Heart right ventricle (tissue), 16 donors: ENCODE measurements at regions of chr20 and their contacts with region 1.

Region 1: GRCh38 chr20:39429716-39430115 is 467.6 kb downstream of the DHX35 start:
- DNase-seq: peak in 1 of 2 donors; percentile 9
- ATAC-seq: peak in 3 of 8 donors; percentile 28 to 67 (median 37)
- H3K4me3 ChIP-seq: no peak overlapping the region
- H3K27ac ChIP-seq: no peak overlapping the region
- H3K4me1 ChIP-seq: no peaks in the 10 kb centered on the region
- H3K27me3 ChIP-seq: no peaks in the 10 kb centered on the region
- CTCF ChIP-seq: peak in 8 of 9 donors; percentile 15 to 53 (median 40)

Region 2: DNA sequence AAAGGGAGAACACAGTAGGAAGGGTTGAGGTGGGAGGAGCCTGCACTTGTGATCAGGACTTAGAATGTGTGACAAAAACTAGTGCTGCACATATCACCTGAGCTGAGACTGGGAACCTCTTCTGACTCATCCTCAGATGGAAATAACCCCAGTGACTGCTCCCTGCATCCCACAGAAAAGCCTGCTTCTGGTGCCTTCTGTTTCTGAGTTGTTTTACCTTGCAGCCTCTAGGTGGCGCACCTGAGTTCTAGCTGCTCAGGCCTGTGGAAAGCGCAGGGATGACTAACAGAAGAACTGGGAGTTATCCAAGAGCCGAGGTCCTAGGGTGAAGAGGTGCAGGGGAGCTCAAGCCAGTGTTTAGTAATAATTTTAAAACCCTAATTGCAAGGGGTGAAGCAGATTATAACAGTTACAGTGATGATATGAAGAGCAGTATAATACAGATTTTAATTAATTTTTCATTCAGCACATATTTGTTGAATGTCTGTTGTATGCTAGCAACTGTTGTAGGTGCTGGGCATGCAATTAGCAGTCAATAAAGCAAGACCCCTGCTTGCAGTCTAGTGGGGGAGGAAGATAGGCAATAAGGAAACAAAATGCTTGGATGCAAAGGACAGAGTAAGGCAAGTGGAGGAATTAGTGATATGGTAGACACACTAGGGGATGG is 165.1 kb before region 1 on chr20:
- intact Hi-C with region 1: loop called in 3 of 10 experiments (anchors 5 to 10 kb)
- DNase-seq: peak; percentile 41 to 50
- ATAC-seq: peak; percentile 28 to 79 (median 54)
- H3K4me3 ChIP-seq: no peak overlapping the region
- H3K27ac ChIP-seq: no peak overlapping the region
- H3K4me1 ChIP-seq: peaks cover 0 to 24% (median 0%) of the 10 kb centered on the region in 9 donors
- H3K27me3 ChIP-seq: peaks cover 0 to 8% (median 0%) of the 10 kb centered on the region in 7 donors
- CTCF ChIP-seq: peak; percentile 58 to 92 (median 86)

Region 3: DNA sequence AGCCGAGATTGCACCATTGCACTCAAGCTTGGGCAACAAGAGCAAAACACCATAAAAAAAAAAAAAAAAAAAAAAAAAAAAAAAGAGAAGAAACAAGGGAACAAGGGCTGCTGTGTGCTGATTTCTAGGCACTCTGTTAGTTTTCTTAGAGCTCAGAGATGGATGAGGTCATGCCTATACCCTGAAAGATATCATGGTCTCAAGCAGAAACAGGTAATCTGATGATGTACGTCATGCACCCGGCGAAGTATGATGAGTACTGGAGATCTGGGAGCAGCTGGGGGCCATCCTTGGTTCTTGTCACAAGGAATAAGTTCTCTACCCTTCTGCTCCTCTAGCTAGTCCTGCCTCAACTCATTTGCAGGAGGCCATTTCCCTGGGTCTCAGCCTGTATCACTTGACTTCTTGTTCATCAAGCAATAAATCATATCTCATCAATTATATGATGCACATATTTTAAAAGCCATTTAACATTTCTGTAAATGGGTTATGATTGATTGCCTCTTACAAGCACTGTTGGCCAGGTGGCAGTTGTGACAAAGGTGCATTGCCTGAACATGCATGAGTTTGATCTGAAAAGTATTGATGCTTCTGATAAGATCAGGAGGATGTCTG is 49.6 kb after region 1 on chr20:
- intact Hi-C with region 1: no loop called
- DNase-seq: no peak
- ATAC-seq: no peak
- H3K4me3 ChIP-seq: no peak overlapping the region
- H3K27ac ChIP-seq: no peak overlapping the region
- H3K4me1 ChIP-seq: no peaks in the 10 kb centered on the region
- H3K27me3 ChIP-seq: no peaks in the 10 kb centered on the region
- CTCF ChIP-seq: no peak

Region 4: GRCh38 chr20:39547546-39548408 is 118.1 kb after region 1 on chr20:
- intact Hi-C with region 1: no loop called
- DNase-seq: no peak
- ATAC-seq: no peak
- H3K4me3 ChIP-seq: no peak overlapping the region
- H3K27ac ChIP-seq: no peak overlapping the region
- H3K4me1 ChIP-seq: no peaks in the 10 kb centered on the region
- H3K27me3 ChIP-seq: peaks cover 0 to 16% (median 0%) of the 10 kb centered on the region in 7 donors
- CTCF ChIP-seq: no peak

Region 5: DNA sequence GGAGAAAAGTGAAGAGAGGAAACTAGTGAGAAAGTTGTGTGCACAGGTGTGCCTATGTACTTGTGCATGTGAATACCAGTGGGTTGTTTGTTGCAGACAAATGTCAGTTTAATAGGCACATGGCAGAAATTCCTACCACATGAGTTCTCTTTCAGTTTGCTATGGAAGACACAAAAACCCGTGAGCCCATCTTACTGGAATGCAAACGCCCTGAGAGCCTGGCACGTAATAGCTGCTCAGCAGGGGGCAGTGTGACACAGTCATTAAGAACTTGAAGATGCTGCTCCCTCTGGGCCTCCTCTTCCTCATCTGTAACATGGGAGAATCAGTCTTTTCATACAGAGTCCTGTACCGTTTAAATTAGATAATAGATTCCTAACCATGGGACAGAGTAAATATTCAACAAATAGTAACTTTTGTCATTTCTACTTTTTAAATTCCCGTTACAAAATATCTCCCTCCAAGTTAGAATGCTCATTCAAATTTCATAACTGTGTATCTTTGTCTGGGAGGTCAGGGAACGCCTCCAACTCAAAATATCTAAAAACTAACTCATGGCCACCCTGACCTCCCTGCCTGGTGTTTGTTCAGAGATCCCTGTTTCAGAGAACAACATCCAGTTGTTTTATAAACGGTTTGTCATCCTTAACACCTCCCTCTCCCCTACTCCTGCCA is 456.4 kb after region 1 on chr20:
- intact Hi-C with region 1: no loop called
- DNase-seq: peak; percentile 51 to 69
- ATAC-seq: peak; percentile 61 to 88 (median 82)
- H3K4me3 ChIP-seq: no peak overlapping the region
- H3K27ac ChIP-seq: peak overlapping the region in 2 of 10 donors; percentile 10 to 50
- H3K4me1 ChIP-seq: peaks cover 0 to 11% (median 0%) of the 10 kb centered on the region in 9 donors
- H3K27me3 ChIP-seq: no peaks in the 10 kb centered on the region
- CTCF ChIP-seq: peak; percentile 24 to 71 (median 65)